ENCODE measurements at regions of chr7 and their contacts with region 1.

Region 1: GRCh38 chr7:25968205-25968993 is 183.6 kb upstream of the NFE2L3 start:
- DNase-seq: peak; percentile 65
- H3K4me3 Mint-ChIP-seq: peak overlapping the region; percentile 1
- H3K27ac Mint-ChIP-seq: peak overlapping the region; percentile 72
- H3K4me1 Mint-ChIP-seq: peaks cover 27% of the 10 kb centered on the region
- H3K27me3 Mint-ChIP-seq: peaks cover 29% of the 10 kb centered on the region

Region 2: GRCh38 chr7:25951031-25951948 is 17.1 kb before region 1 on chr7:
- CTCF ChIA-PET with region 1: no interaction called
- POLR2A ChIA-PET with region 1: interaction called, 10 read pairs
- DNase-seq: peak; percentile 93
- H3K4me3 Mint-ChIP-seq: peak overlapping the region; percentile 80
- H3K27ac Mint-ChIP-seq: no peak overlapping the region
- H3K4me1 Mint-ChIP-seq: peaks cover 23% of the 10 kb centered on the region
- H3K27me3 Mint-ChIP-seq: peaks cover 18% of the 10 kb centered on the region

Region 3: GRCh38 chr7:25982684-25983083 is 14.3 kb after region 1 on chr7:
- CTCF ChIA-PET with region 1: no interaction called
- POLR2A ChIA-PET with region 1: no interaction called
- DNase-seq: no peak
- H3K4me3 Mint-ChIP-seq: no peak overlapping the region
- H3K27ac Mint-ChIP-seq: no peak overlapping the region
- H3K4me1 Mint-ChIP-seq: peaks cover 2% of the 10 kb centered on the region
- H3K27me3 Mint-ChIP-seq: peaks cover 11% of the 10 kb centered on the region

Measured in activated CD4-positive, alpha-beta memory T cell treated with anti-CD3 and anti-CD28 coated beads, Interleukin-2, amount 10 ng/mL, durations not matched to agents 7 days and 5 days (primary cell).